ENCODE measurements at regions of chr5 and their contacts with region 1.

Region 1: GRCh38 chr5:132655821-132656773 is 1.9 kb upstream of the IL13 start:
- DNase-seq: peak in 1 of 2 donors; percentile 60
- H3K4me3 ChIP-seq: peak overlapping the region; percentile 59 to 72
- H3K27ac ChIP-seq: no peak overlapping the region
- H3K4me1 ChIP-seq: peaks cover 6 to 8% of the 10 kb centered on the region in 2 donors
- H3K27me3 ChIP-seq: no peaks in the 10 kb centered on the region
- CTCF ChIP-seq: peak in 2 of 3 experiments; percentile 43 to 45

Region 2: DNA sequence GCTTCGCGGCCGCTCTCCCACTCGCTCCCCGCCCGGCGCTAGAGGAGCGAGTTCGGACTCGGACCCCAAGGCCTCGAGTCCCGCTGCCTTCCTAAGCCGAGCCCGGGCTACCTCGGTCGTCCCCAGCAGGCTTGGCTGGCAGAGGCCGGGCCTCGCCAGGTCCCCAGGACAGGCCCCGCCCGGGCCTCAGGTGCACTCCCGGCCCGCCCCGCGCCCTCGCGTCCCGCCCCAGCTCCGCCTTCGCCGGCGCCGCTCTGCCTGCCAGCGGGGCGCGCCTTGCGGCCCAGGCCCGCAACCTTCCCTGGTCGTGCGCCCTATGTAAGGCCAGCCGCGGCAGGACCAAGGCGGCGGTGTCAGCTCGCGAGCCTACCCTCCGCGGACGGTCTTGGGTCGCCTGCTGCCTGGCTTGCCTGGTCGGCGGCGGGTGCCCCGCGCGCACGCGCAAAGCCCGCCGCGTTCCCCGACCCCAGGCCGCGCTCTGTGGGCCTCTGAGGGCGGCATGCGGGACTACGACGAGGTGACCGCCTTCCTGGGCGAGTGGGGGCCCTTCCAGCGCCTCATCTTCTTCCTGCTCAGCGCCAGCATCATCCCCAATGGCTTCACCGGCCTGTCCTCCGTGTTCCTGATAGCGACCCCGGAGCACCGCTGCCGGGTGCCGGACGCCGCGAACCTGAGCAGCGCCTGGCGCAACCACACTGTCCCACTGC is 286.5 kb before region 1 on chr5 and contains the start of gene SLC22A5:
- intact Hi-C with region 1: no loop called
- DNase-seq: peak in 1 of 2 donors; percentile 82
- H3K4me3 ChIP-seq: peak within 1 kb of the TSS; percentile 75 to 79
- H3K27ac ChIP-seq: peak within 1 kb of the TSS; percentile 84 to 93
- H3K4me1 ChIP-seq: peaks cover 5 to 22% of the 10 kb centered on the region in 2 donors
- H3K27me3 ChIP-seq: no peaks in the 10 kb centered on the region
- CTCF ChIP-seq: no peak
- total RNA-seq, gene SLC22A5: 11.9 TPM

Region 3: GRCh38 chr5:132526290-132526973 is 129.7 kb before region 1 on chr5:
- intact Hi-C with region 1: no loop called
- DNase-seq: no peak
- H3K4me3 ChIP-seq: no peak overlapping the region
- H3K27ac ChIP-seq: no peak overlapping the region
- H3K4me1 ChIP-seq: peaks cover 0 to 2% of the 10 kb centered on the region in 2 donors
- H3K27me3 ChIP-seq: no peaks in the 10 kb centered on the region
- CTCF ChIP-seq: peak; percentile 64 to 79 (median 68)

Region 4: DNA sequence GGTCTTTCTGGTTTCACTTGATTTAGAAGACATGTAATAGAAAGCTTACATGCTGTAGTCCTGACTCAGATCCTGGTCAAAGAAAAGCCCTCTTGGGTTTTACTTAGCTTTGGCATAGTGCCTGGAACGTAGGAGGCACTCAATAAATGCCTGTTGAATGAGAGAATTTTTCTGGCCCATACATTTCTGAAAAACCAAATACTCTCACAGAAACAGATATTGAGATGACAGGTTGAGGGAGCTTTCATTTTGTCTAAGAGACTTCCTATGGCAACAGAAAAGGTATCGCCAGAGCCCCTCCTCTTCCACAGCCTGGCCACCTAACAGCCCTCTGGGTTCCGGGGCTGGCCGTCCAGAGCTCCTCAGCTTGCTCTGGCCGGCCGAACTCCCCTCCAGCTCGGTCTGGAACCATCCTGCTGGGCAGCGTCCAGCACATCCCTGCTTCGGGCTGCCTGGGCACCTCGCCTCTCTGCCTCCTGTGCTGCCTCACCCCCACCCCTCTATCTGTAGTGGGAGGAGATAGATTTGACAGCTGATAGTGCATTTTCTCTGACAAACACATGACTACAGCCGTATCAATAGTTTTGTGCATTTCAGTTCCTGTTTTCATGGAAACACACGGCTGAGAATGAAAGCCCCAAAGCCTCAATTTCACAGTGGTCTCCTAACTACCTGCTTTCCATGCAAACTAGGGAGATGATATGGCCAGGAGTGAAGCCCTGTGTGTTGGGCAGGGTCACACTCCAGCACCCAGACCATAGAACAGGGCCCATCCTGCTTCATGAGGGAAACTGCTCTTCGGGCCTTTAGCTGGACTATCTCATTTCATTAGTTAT is 18.8 kb after region 1 on chr5:
- intact Hi-C with region 1: loop called (anchors 1 kb)
- DNase-seq: peak in 1 of 2 donors; percentile 73
- H3K4me3 ChIP-seq: peak overlapping the region; percentile 29 to 54
- H3K27ac ChIP-seq: peak overlapping the region; percentile 95 to 96
- H3K4me1 ChIP-seq: peaks cover 9 to 23% of the 10 kb centered on the region in 2 donors
- H3K27me3 ChIP-seq: no peaks in the 10 kb centered on the region
- CTCF ChIP-seq: no peak

Region 5: DNA sequence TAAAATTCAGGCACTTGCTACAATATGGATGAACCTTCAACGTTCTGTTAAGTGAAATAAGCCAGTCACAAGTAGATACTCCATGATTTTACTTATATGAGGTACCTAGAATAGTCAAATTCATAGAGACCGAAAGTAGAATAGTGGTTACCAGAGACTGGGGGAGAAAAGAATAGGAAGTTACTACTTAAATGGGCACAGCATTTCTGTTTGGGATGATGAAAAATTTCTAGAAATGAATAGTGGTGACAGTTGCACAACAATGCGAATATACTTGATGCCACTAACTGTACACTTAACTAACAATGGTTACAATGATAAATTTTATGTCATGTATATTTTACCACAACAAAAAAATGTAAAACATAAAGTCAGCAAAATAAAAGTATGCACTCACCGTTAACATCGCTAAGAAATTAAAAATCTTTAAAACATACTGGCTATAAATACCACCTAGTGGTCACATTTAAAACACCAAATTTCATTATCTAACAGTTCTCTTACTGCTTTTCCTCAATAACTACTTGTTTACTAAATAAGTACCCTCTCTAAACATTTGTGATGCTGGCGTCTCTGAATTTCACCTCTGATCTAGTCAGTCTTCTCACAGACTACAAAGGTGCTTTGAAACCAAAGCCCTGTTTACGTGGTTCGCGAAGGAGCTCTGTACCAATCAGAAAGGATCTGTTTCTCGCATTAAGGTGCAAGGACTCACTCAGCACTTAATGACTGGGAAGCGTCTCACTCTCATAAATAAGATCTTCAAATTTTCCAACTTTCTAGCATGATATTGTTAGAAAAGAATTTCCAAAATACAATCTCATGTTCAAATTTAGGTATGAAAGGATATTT is 58.6 kb after region 1 on chr5:
- intact Hi-C with region 1: loop called (anchors 10 kb)
- DNase-seq: no peak
- H3K4me3 ChIP-seq: no peak overlapping the region
- H3K27ac ChIP-seq: no peak overlapping the region
- H3K4me1 ChIP-seq: no peaks in the 10 kb centered on the region
- H3K27me3 ChIP-seq: no peaks in the 10 kb centered on the region
- CTCF ChIP-seq: peak; percentile 21 to 49 (median 37)

Region 6: GRCh38 chr5:132820162-132820754 is 164.2 kb after region 1 on chr5:
- intact Hi-C with region 1: loop called (anchors 5 kb)
- DNase-seq: peak; percentile 46 to 96
- H3K4me3 ChIP-seq: no peak overlapping the region
- H3K27ac ChIP-seq: no peak overlapping the region
- H3K4me1 ChIP-seq: peaks cover 5 to 8% of the 10 kb centered on the region in 2 donors
- H3K27me3 ChIP-seq: no peaks in the 10 kb centered on the region
- CTCF ChIP-seq: peak; percentile 88 to 93 (median 93)